Activated CD4-positive, alpha-beta memory T cell treated with anti-CD3 and anti-CD28 coated beads for 36 hours (primary cell): ENCODE measurements at regions of chr6 and their contacts with region 1.

Region 1: GRCh38 chr6:158026054-158026900 is 44.6 kb downstream of the SYNJ2 start:
- DNase-seq: peak; percentile 90
- H3K4me3 Mint-ChIP-seq: peak overlapping the region; percentile 77
- H3K27ac Mint-ChIP-seq: peak overlapping the region; percentile 98
- H3K4me1 Mint-ChIP-seq: peaks cover 29% of the 10 kb centered on the region
- H3K27me3 Mint-ChIP-seq: no peaks in the 10 kb centered on the region

Region 2: DNA sequence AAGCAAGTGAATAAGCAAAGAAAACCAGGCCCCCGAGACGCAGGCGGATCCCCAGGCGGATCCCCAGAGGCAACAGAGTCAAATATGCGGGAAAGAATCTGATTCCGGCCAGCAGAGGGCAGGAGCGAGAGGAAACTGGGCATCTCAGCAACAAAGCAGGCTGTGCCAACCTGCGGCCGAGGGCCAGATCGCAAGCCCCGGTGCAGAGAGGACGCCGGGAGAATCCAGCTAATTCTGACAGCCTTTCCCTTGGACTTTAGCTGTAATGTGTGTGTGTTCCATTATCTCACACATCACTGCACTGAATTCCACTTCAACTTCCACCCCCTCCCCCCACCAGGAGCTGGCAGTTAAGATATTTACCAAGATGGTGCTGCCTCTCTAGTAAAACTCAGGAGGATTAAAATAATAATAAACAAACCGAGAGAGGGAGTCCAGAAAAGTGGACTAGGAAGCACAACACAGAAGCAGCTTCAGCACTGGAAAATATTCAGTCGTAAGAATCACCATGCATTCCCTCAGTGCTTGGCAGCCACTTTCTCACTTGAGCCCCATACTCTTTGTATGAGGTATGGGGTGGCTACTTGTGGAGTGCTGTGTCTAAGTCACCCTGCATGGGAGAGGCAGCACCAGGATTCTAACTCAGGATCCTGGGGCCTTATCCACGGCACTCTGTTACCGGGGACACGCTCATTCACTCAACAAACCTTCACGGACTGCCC is 269.4 kb before region 1 on chr6:
- CTCF ChIA-PET with region 1: interaction called, 8 read pairs
- POLR2A ChIA-PET with region 1: no interaction called
- intact Hi-C with region 1: loop called (anchors 2 kb)
- DNase-seq: peak; percentile 91
- H3K4me3 Mint-ChIP-seq: peak overlapping the region; percentile 38
- H3K27ac Mint-ChIP-seq: peak overlapping the region; percentile 89
- H3K4me1 Mint-ChIP-seq: peaks cover 92% of the 10 kb centered on the region
- H3K27me3 Mint-ChIP-seq: no peaks in the 10 kb centered on the region

Region 3: DNA sequence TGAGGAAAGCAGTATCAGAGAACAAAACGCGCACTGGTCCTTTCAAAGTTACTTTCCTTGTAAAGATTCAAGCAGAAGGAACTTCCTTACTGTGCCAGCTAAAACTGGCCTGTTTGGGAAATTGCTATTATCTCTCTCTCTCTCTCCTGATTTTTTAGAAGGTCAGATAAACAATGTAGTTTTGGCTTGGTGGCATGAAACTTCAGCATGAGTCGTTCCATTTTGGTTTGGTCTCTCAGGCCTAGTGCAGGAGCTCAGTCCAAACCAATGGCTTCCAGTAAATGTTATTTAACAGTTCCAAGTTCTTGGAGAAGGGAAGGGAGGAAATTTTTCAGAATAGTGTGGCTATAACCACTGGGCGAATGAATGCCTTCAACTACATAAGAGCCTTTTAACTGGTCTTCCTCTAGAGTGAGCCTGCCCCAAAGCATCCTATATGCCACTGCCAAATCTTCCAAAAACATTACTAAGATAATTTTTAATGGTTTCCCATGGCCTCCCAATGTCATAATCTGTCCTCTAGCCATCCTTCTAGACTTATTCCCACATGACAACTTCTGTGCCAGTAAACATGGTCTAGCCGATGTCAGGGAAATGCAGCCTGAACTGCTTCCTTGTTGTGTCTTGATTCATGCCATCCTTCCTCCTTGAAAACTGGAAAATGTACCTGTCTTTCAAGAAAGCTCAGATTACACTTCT is 212.4 kb before region 1 on chr6:
- CTCF ChIA-PET with region 1: no interaction called
- POLR2A ChIA-PET with region 1: no interaction called
- intact Hi-C with region 1: no loop called
- DNase-seq: no peak
- H3K4me3 Mint-ChIP-seq: no peak overlapping the region
- H3K27ac Mint-ChIP-seq: no peak overlapping the region
- H3K4me1 Mint-ChIP-seq: peaks cover 31% of the 10 kb centered on the region
- H3K27me3 Mint-ChIP-seq: peaks cover 5% of the 10 kb centered on the region

Region 4: DNA sequence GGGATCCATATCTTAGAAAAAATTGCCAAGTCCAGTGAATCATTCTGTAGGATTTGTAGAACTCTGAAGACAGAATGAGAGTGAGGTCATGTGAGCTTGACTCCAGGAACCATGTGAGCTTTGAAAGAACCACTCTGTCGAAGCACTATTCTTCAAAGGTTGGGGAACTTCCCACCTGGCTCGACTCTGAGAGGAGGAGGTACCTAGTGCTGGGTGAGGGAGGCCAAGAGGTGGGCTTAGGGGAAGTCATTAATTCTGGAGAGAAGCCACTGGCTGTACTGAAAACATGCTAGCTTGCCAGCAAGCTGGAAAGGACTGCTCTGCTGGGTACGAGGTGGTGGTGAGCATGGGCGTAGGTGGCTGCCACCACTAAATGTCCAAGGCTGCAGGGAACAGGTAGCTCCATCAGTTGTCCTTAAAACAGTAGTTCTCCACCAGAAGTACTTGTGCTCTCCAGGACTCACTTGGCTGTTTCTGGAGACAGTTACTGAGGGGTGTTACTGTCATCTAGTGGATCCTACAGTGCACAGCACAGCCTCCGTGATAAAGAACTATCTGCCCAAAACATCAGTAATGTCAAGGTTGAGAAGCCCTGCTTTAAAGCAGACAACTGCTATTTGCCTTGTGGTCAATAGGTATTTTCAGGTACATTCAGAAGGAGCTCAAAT is 79.3 kb before region 1 on chr6:
- CTCF ChIA-PET with region 1: interaction called, 10 read pairs
- POLR2A ChIA-PET with region 1: no interaction called
- intact Hi-C with region 1: no loop called
- DNase-seq: no peak
- H3K4me3 Mint-ChIP-seq: no peak overlapping the region
- H3K27ac Mint-ChIP-seq: peak overlapping the region; percentile 34
- H3K4me1 Mint-ChIP-seq: peaks cover 28% of the 10 kb centered on the region
- H3K27me3 Mint-ChIP-seq: no peaks in the 10 kb centered on the region

Region 5: GRCh38 chr6:158009114-158009891 is 17.0 kb before region 1 on chr6:
- CTCF ChIA-PET with region 1: interaction called, 28 read pairs
- POLR2A ChIA-PET with region 1: interaction called, 6 read pairs
- intact Hi-C with region 1: loop called (anchors 2 kb)
- DNase-seq: peak; percentile 46
- H3K4me3 Mint-ChIP-seq: peak overlapping the region; percentile 36
- H3K27ac Mint-ChIP-seq: peak overlapping the region; percentile 50
- H3K4me1 Mint-ChIP-seq: peaks cover 74% of the 10 kb centered on the region
- H3K27me3 Mint-ChIP-seq: no peaks in the 10 kb centered on the region

Region 6: GRCh38 chr6:158047127-158047518 is 20.8 kb after region 1 on chr6:
- CTCF ChIA-PET with region 1: interaction called, 7 read pairs
- POLR2A ChIA-PET with region 1: interaction called, 10 read pairs
- intact Hi-C with region 1: loop called (anchors 2 kb)
- DNase-seq: peak; percentile 81
- H3K4me3 Mint-ChIP-seq: no peak overlapping the region
- H3K27ac Mint-ChIP-seq: peak overlapping the region; percentile 14
- H3K4me1 Mint-ChIP-seq: peaks cover 15% of the 10 kb centered on the region
- H3K27me3 Mint-ChIP-seq: no peaks in the 10 kb centered on the region

Region 7: GRCh38 chr6:158649289-158650143 is 623.2 kb after region 1 on chr6 and contains the start of gene SYTL3:
- CTCF ChIA-PET with region 1: no interaction called
- POLR2A ChIA-PET with region 1: interaction called, 3 read pairs
- intact Hi-C with region 1: loop called (anchors 10 kb)
- DNase-seq: peak; percentile 93
- H3K4me3 Mint-ChIP-seq: peak within 1 kb of the TSS; percentile 79
- H3K27ac Mint-ChIP-seq: peak within 1 kb of the TSS; percentile 99
- H3K4me1 Mint-ChIP-seq: peaks cover 77% of the 10 kb centered on the region
- H3K27me3 Mint-ChIP-seq: no peaks in the 10 kb centered on the region
- total RNA-seq, gene SYTL3: 181 to 186 TPM